AG04450 (cell line): ENCODE measurements at regions of chr7 and their contacts with region 1.

Region 1: DNA sequence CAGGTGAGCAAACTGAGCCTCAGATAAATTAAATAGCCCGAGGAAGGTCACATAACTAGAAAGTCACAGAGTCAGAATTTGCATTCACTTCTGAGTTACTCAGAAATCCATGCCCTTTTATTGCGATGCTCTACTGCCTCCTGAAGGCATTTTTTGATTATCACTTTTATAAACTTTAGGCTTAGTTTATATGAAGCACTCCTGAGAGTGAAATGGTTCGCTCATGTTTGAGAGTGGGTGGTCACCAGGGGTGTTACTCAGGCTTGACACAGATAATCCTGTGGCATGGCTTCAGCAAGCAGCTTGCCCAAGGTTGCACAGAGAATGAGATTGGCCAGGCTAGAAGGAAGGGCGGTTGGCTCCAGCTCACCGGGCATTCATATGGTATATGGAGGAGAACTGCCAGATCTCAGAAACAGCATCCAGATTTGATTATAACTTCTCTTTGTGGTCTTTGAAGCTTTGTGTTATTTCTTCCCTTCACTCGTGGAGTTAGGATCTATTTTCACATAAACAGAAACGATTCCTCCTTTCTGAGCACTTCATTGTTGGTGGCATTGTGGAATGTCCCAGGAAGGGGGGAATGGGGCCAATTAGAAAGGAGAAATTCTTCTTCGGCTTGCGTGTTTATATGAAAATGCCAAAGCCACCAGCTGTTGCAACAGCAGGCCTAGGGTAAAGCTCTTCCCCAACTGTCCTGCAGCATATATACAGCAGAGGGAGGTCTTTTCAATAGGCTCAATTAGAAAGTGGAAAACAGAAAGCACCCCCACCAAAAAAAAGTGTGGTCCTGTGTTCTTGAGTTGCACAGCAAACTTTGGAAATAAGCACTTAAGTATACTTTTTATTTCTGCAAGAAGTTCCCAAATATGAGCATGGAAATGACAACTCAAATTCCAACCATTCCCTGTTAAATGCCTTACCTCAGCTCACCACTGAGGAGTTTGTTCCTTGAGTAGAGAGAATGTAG is 628.8 kb downstream of the SUGCT start:
- DNase-seq: peak; percentile 54
- H3K4me3 ChIP-seq: peak overlapping the region; percentile 35
- H3K27ac ChIP-seq: peak overlapping the region; percentile 25
- H3K27me3 ChIP-seq: no peaks in the 10 kb centered on the region
- CTCF ChIP-seq: peak; percentile 76

Region 2: DNA sequence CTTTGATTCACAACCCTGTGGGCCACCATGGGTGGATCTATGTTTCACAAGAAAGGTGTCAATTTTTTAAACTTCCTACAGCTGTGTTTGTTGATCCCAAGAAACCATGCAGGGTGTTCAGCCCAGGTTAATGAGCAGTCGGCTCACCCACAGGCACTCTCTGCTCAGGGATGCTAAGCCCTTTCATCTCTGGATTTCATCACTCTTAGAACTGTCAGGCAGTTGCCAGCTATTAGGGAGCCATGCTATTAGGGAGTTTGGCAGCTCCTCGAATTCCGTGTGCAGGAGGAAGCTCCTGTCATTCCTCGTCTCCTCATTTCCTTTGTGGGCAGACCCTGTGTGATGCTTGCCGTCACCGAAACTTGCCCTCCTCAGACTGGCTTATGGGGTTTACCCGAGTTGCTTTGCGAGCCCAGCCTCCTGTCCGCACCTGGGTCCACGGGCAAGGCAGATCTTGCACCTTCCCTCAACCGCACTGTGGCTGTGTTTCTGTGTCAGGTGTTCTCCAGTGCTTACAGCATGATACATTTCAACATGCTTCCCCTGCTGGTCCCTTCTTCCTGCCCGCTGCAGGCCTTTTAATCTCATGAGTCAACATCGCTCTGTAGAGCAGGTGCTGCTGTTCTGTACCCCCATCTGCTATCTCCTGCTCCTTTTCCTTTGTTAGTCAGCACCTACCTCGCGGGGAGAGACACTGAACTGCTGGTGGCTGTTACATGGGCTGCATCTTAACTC is 119.0 kb before region 1 on chr7:
- CTCF ChIA-PET with region 1: no interaction called
- POLR2A ChIA-PET with region 1: no interaction called
- DNase-seq: no peak
- H3K4me3 ChIP-seq: no peak overlapping the region
- H3K27ac ChIP-seq: no peak overlapping the region
- H3K27me3 ChIP-seq: no peaks in the 10 kb centered on the region
- CTCF ChIP-seq: no peak

Region 3: DNA sequence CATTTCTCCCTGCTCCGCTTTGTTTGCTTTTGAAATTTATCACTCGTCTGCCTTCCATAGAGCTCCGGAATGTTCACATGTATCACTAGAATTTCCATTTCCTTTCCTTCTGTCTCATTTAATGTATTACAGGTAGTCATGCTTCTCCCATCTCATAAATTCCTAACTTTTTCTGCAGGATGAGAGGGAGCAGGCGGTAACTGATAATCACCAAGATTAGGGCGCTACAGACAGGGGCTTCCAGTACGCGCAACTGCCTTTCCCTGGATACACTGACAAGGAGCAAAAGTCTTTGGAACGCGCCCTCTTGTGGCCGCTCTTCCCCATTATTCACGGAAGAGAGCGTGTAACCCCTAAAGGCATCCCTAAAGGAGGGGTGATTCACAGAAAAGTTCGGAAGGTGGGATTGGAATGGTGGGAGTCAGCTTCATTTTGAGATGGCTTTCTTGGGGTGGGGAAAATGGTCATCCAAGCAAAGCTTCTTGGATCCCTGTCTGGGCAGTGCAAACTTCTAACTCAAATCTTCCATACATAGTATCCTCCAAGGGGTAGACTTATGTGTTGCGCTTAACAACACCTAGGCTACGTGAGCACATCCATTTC is 932.8 kb after region 1 on chr7:
- CTCF ChIA-PET with region 1: interaction called, 11 read pairs
- POLR2A ChIA-PET with region 1: no interaction called
- DNase-seq: peak; percentile 76
- H3K4me3 ChIP-seq: peak overlapping the region; percentile 81
- H3K27ac ChIP-seq: peak overlapping the region; percentile 84
- H3K27me3 ChIP-seq: no peaks in the 10 kb centered on the region
- CTCF ChIP-seq: peak; percentile 83